A673 (cell line): ENCODE measurements at regions of chr9 and their contacts with region 1.

Region 1: DNA sequence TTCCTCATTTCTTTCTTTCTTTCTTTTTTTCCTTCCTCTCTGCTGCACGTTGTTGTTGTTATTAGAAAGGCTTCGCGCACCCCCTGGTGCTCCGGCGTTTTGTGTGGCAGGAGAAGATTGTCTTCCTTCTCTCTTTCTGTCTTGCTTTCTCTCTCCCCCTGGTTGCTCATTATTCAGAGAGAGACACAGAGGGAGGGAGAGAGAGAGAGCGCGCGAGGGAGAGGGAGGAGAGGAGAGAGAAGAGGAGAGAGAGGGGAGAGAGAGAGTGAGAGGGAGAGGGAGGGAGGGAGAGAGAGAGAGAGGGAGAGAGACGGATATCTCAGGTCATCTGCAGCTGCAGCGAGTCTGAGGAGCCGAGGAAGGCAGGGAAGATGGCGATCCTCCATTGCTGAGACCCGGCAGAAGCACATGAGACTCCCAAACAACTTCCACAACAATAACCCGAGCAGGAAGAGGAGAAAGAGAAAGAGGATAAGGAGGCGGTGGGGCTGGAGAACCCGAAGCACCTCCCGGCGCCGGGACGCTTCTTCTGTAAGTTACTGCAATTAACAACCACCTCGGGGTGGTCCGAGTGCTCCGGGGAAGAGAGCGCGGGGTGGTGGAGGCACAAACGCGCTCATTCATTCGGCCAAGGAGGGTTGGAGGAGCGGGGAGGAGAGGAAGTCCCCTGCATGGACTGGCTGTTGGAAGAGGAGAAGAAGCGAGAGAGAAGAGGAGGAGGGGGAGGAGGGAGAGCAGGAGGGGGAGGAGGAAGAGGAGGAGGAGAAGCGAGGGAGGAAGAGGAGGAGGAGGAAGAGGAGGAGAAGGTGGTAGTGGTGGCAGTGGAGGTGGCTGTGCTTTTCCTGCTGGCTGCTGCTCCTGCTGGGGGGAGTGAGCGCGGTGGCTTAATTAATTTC is at the start of gene ZNF462:
- DNase-seq: peak; percentile 75
- H3K4me3 ChIP-seq: peak within 1 kb of the TSS; percentile 79
- H3K27ac ChIP-seq: peak within 1 kb of the TSS; percentile 83
- H3K4me1 ChIP-seq: peaks cover 5% of the 10 kb centered on the region
- H3K27me3 ChIP-seq: peaks cover 34% of the 10 kb centered on the region
- CTCF ChIP-seq: peak; percentile 36; the same call in 1 of the 2 replicates
- total RNA-seq, gene ZNF462: 38.4 and 40.5 TPM in 2 replicates

Region 2: GRCh38 chr9:106921341-106921899 is 58.3 kb after region 1 on chr9:
- CTCF ChIA-PET with region 1: no interaction called
- POLR2A ChIA-PET with region 1: no interaction called
- intact Hi-C with region 1: loop called (anchors 5 kb)
- DNase-seq: peak; percentile 84
- H3K4me3 ChIP-seq: peak overlapping the region; percentile 1
- H3K27ac ChIP-seq: peak overlapping the region; percentile 87
- H3K4me1 ChIP-seq: peaks cover 16% of the 10 kb centered on the region
- H3K27me3 ChIP-seq: no peaks in the 10 kb centered on the region
- CTCF ChIP-seq: no peak

Region 3: GRCh38 chr9:107008011-107008410 is 144.9 kb after region 1 on chr9:
- CTCF ChIA-PET with region 1: no interaction called
- POLR2A ChIA-PET with region 1: no interaction called
- intact Hi-C with region 1: loop called (anchors 5 kb)
- DNase-seq: peak; percentile 75
- H3K4me3 ChIP-seq: no peak overlapping the region
- H3K27ac ChIP-seq: peak overlapping the region; percentile 50
- H3K4me1 ChIP-seq: peaks cover 20% of the 10 kb centered on the region
- H3K27me3 ChIP-seq: no peaks in the 10 kb centered on the region
- CTCF ChIP-seq: no peak

Region 4: GRCh38 chr9:107137495-107138202 is 274.6 kb after region 1 on chr9:
- CTCF ChIA-PET with region 1: interaction called, 3 read pairs
- POLR2A ChIA-PET with region 1: no interaction called
- intact Hi-C with region 1: loop called (anchors 5 kb)
- DNase-seq: peak; percentile 53
- H3K4me3 ChIP-seq: no peak overlapping the region
- H3K27ac ChIP-seq: no peak overlapping the region
- H3K4me1 ChIP-seq: no peaks in the 10 kb centered on the region
- H3K27me3 ChIP-seq: peaks cover 9% of the 10 kb centered on the region
- CTCF ChIP-seq: peak; percentile 82